ENCODE measurements at regions of chr2 and their contacts with region 1.

Region 1: GRCh38 chr2:25228848-25229278 is 60.5 kb upstream of the POMC start:
- DNase-seq: peak; percentile 90 to 91 (median 90)
- ATAC-seq: peak; percentile 96
- H3K4me3 ChIP-seq: no peak overlapping the region
- H3K27ac ChIP-seq: no peak overlapping the region
- H3K4me1 ChIP-seq: peaks cover 9 to 29% of the 10 kb centered on the region in 2 experiments; a peak in 4 of 5 replicates
- H3K27me3 ChIP-seq: no peaks in the 10 kb centered on the region
- CTCF ChIP-seq: peak; percentile 83 to 88 (median 85)
- EP300 ChIP-seq: no peak
- POLR2A ChIP-seq: no peak
- RAD21 ChIP-seq: peak; percentile 48 to 76

Region 2: GRCh38 chr2:25201265-25201664 is 27.6 kb before region 1 on chr2:
- CTCF ChIA-PET with region 1: no interaction called
- POLR2A ChIA-PET with region 1: interaction called, 7 read pairs
- in situ Hi-C with region 1: no loop called
- intact Hi-C with region 1: loop called (anchors 2 kb)
- DNase-seq: peak; percentile 43 to 53 (median 50)
- ATAC-seq: peak; percentile 93
- H3K4me3 ChIP-seq: no peak overlapping the region
- H3K27ac ChIP-seq: no peak overlapping the region
- H3K4me1 ChIP-seq: peaks cover 0 to 11% of the 10 kb centered on the region in 2 experiments; a peak in 2 of 5 replicates
- H3K27me3 ChIP-seq: 0 out of 5 replicates have a peak, but pooled peaks cover 0 to 2% of the 10 kb centered on the region in 2 experiments
- CTCF ChIP-seq: peak; percentile 42 to 54 (median 48); a peak in 3 of 6 replicates
- EP300 ChIP-seq: no peak
- POLR2A ChIP-seq: no peak
- RAD21 ChIP-seq: peak in 1 of 2 experiments; percentile 33; a peak in 2 of 4 replicates

Measured in K562 (cell line).